ENCODE measurements at regions of chr4 and their contacts with region 1.

Region 1: DNA sequence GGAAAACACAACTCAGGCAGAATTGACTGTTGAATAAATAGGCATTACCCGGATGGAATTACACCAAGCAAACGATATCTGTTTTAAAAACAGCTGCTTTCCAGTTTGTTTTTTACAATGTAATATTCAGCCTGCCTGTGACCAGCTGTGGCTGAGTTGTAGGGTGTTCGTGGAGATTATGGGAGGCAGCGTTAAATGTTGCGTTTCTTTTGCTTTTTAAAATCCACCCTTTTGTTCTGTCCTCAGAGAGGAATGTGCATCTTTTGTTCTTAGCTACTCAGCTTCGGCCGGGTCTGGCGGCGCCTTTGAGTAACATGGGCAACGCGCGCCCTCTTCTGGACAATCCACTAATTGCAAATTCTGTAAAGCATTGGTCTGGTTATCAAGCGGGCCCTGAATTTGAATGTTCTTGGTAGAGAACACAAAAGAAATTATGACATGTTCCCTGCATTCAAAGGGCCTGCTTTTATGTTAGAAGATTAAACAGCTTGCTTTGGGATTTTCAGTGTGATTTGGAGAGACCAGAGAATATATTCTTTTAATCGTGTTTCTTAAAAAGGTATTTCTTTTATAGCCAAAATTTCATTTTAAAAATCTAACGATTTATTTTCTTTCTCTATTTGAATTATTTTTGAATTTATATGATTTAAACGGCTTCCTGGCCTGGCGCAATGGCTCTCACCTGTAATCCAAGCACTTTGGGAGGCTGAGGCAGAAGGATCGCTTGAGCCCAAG is 76.3 kb upstream of the TRIM2 start:
- DNase-seq: peak; percentile 50
- ATAC-seq: peak; percentile 82
- H3K4me3 Mint-ChIP-seq: no peak overlapping the region
- H3K27ac Mint-ChIP-seq: no peak overlapping the region
- H3K4me1 Mint-ChIP-seq: peaks cover 2% of the 10 kb centered on the region
- H3K27me3 Mint-ChIP-seq: peaks cover 5% of the 10 kb centered on the region
- CTCF ChIP-seq: peak; percentile 67

Region 2: GRCh38 chr4:152408514-152409327 is 719.2 kb before region 1 on chr4:
- CTCF ChIA-PET with region 1: no interaction called
- POLR2A ChIA-PET with region 1: no interaction called
- intact Hi-C with region 1: loop called (anchors 5 kb)
- DNase-seq: no peak
- ATAC-seq: no peak
- H3K4me3 Mint-ChIP-seq: no peak overlapping the region
- H3K27ac Mint-ChIP-seq: no peak overlapping the region
- H3K4me1 Mint-ChIP-seq: peaks cover 5% of the 10 kb centered on the region
- H3K27me3 Mint-ChIP-seq: no peaks in the 10 kb centered on the region
- CTCF ChIP-seq: no peak

Region 3: DNA sequence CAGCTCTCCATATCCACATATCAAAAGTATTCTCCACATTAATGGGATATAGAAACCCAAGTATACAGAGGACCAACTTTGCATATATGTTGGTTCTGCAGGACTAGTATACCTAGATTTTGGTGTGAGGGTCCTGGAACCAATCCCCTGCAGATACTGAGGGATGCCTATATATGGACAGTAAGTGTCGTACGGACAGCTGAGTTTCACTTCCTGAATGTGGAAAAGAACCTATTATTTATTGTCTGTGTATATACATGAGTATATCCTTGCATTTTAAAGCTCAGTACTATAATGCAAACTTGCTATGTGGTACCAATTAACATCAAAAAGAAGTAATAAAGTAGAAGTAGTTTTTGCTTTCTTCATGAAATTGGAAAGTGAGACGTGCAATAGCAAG is 693.9 kb before region 1 on chr4:
- CTCF ChIA-PET with region 1: no interaction called
- POLR2A ChIA-PET with region 1: no interaction called
- intact Hi-C with region 1: no loop called
- DNase-seq: no peak
- ATAC-seq: peak; percentile 81
- H3K4me3 Mint-ChIP-seq: no peak overlapping the region
- H3K27ac Mint-ChIP-seq: no peak overlapping the region
- H3K4me1 Mint-ChIP-seq: peaks cover 36% of the 10 kb centered on the region
- H3K27me3 Mint-ChIP-seq: no peaks in the 10 kb centered on the region
- CTCF ChIP-seq: no peak

Region 4: GRCh38 chr4:152850377-152850776 is 277.6 kb before region 1 on chr4:
- CTCF ChIA-PET with region 1: interaction called, 71 read pairs
- POLR2A ChIA-PET with region 1: interaction called, 5 read pairs
- intact Hi-C with region 1: loop called (anchors 1 kb)
- DNase-seq: no peak
- ATAC-seq: peak; percentile 75
- H3K4me3 Mint-ChIP-seq: peak overlapping the region; percentile 52
- H3K27ac Mint-ChIP-seq: peak overlapping the region; percentile 78
- H3K4me1 Mint-ChIP-seq: peaks cover 25% of the 10 kb centered on the region
- H3K27me3 Mint-ChIP-seq: no peaks in the 10 kb centered on the region
- CTCF ChIP-seq: no peak

Region 5: GRCh38 chr4:152937336-152938236 is 190.3 kb before region 1 on chr4:
- CTCF ChIA-PET with region 1: interaction called, 3 read pairs
- POLR2A ChIA-PET with region 1: no interaction called
- intact Hi-C with region 1: loop called (anchors 5 kb)
- DNase-seq: peak; percentile 34
- ATAC-seq: peak; percentile 69
- H3K4me3 Mint-ChIP-seq: peak overlapping the region; percentile 83
- H3K27ac Mint-ChIP-seq: no peak overlapping the region
- H3K4me1 Mint-ChIP-seq: peaks cover 22% of the 10 kb centered on the region
- H3K27me3 Mint-ChIP-seq: peaks cover 57% of the 10 kb centered on the region
- CTCF ChIP-seq: no peak

Region 6: DNA sequence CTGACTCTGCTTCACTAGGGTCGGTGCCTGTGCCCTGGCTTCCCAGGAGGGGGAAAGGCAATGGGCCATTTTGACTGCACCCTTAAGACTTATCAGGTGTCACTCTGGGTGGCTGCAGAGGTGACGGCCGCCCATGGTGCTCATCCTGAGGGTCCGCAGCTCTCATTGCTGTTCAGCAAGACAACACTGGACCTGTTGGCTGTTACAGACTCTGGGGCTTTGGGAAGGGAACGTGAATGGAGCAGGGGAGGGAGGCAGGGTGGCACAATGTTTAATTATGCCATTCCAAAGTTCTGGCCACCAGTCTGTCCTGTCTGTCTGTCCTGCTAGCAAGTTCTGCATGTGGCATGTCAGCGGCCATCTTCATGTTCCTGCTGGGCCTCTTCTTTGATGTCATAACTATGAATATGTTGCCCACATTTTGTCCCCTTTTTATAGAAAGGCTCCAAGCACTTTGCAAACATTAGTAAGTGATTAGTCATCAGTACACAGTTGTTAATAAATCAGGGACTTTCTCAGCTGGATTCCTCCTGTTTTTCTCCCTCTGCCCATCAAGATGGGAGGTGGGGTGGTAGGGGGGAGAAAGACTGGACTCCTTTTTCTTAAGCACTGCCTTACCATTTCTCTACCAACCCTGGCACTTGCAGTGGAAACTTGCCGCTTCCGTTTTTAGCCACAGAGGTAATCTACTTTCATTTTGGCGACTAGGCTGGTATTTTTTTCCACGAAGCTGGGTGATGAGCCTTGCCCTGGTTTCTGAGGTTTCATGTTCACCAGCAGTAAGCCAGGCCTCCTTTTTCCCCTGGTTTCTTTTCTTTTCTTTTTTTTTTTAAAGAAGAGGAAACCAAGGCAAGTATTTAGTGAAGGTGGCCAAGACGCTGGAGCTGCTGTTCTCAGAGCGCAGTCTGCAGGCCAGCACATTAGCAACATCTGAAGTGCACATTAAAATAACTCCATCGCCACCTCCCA is 12.3 kb before region 1 on chr4:
- CTCF ChIA-PET with region 1: interaction called, 58 read pairs
- POLR2A ChIA-PET with region 1: no interaction called
- intact Hi-C with region 1: no loop called
- DNase-seq: peak; percentile 31
- ATAC-seq: peak; percentile 84
- H3K4me3 Mint-ChIP-seq: peak overlapping the region; percentile 65
- H3K27ac Mint-ChIP-seq: no peak overlapping the region
- H3K4me1 Mint-ChIP-seq: peaks cover 3% of the 10 kb centered on the region
- H3K27me3 Mint-ChIP-seq: no peaks in the 10 kb centered on the region
- CTCF ChIP-seq: no peak

Region 7: GRCh38 chr4:153189016-153189801 is 61.3 kb after region 1 on chr4:
- CTCF ChIA-PET with region 1: no interaction called
- POLR2A ChIA-PET with region 1: no interaction called
- intact Hi-C with region 1: no loop called
- DNase-seq: no peak
- ATAC-seq: no peak
- H3K4me3 Mint-ChIP-seq: no peak overlapping the region
- H3K27ac Mint-ChIP-seq: no peak overlapping the region
- H3K4me1 Mint-ChIP-seq: no peaks in the 10 kb centered on the region
- H3K27me3 Mint-ChIP-seq: peaks cover 12% of the 10 kb centered on the region
- CTCF ChIP-seq: no peak

Region 8: DNA sequence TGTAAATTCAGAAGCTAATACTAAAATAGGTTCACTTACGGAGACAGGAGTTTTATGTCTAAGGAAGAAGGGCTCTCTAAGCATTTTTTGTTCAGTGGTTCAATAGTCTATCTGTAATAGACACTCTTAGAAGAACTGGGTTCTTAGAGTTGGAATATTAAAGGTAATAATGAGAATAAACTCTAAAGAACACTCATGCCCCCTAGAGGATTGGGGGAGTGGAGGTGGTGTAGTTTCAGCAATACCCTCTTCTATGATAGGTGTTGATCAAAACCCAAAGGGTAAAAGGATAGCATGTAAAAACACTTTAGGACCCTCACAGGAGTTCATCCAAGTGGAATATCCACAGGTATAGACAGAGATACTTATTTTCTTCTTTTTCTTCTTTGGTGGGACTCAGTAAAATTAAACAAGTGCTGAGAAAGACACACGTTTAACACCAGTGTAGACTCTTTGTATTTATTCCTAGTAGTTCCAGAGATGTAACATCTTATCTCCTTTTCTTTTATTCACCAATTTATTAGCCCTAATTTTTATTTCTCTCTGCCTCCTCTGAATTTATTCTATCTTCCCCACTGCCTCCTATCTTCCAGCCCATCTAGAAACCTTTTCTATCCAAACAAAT is 190.9 kb after region 1 on chr4:
- CTCF ChIA-PET with region 1: interaction called, 3 read pairs
- POLR2A ChIA-PET with region 1: no interaction called
- intact Hi-C with region 1: loop called (anchors 1 kb)
- DNase-seq: no peak
- ATAC-seq: peak; percentile 65
- H3K4me3 Mint-ChIP-seq: no peak overlapping the region
- H3K27ac Mint-ChIP-seq: no peak overlapping the region
- H3K4me1 Mint-ChIP-seq: no peaks in the 10 kb centered on the region
- H3K27me3 Mint-ChIP-seq: no peaks in the 10 kb centered on the region
- CTCF ChIP-seq: peak; percentile 27

Region 9: GRCh38 chr4:153643406-153644383 is 515.8 kb after region 1 on chr4:
- CTCF ChIA-PET with region 1: interaction called, 3 read pairs
- POLR2A ChIA-PET with region 1: interaction called, 3 read pairs
- intact Hi-C with region 1: loop called (anchors 1 kb)
- DNase-seq: no peak
- ATAC-seq: peak; percentile 95
- H3K4me3 Mint-ChIP-seq: no peak overlapping the region
- H3K27ac Mint-ChIP-seq: no peak overlapping the region
- H3K4me1 Mint-ChIP-seq: peaks cover 10% of the 10 kb centered on the region
- H3K27me3 Mint-ChIP-seq: no peaks in the 10 kb centered on the region
- CTCF ChIP-seq: peak; percentile 36